ENCODE measurements at regions of chr9 and their contacts with region 1.

Region 1: GRCh38 chr9:87812375-87813118 is 70.1 kb upstream of the SPATA31E1 start:
- DNase-seq: no peak
- H3K4me3 Mint-ChIP-seq: no peak overlapping the region
- H3K27ac Mint-ChIP-seq: peak overlapping the region; percentile 12
- H3K4me1 Mint-ChIP-seq: peaks cover 25% of the 10 kb centered on the region
- H3K27me3 Mint-ChIP-seq: peaks cover 13% of the 10 kb centered on the region

Region 2: DNA sequence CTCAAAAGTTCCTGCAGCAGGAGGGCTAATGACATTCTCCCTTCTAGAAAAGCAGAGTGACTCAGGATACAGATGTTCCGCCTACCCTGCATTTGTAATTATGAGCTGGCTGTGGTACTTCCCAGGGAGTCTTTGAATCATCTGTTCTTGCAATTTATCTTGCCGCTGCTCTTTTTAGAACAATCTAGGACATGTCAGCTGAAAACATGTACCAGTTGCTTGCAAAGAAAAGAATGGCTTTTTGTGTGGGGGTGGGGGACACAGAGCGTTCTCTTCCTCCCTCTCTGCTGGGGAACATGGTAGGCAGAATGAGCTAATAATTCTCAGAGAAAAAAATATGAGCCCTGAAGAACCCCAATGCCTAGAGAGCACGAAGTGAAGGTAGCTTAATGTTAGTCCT is 1406.6 kb before region 1 on chr9:
- intact Hi-C with region 1: loop called (anchors 10 kb)
- DNase-seq: no peak
- H3K4me3 Mint-ChIP-seq: no peak overlapping the region
- H3K27ac Mint-ChIP-seq: peak overlapping the region; percentile 6
- H3K4me1 Mint-ChIP-seq: peaks cover 11% of the 10 kb centered on the region
- H3K27me3 Mint-ChIP-seq: peaks cover 7% of the 10 kb centered on the region

Region 3: GRCh38 chr9:87464110-87464965 is 348.2 kb before region 1 on chr9:
- intact Hi-C with region 1: loop called (anchors 5 kb)
- DNase-seq: no peak
- H3K4me3 Mint-ChIP-seq: no peak overlapping the region
- H3K27ac Mint-ChIP-seq: peak overlapping the region; percentile 55
- H3K4me1 Mint-ChIP-seq: peaks cover 12% of the 10 kb centered on the region
- H3K27me3 Mint-ChIP-seq: peaks cover 2% of the 10 kb centered on the region

Region 4: GRCh38 chr9:87707805-87708506 is 104.6 kb before region 1 on chr9:
- intact Hi-C with region 1: loop called (anchors 1 kb)
- DNase-seq: no peak
- H3K4me3 Mint-ChIP-seq: no peak overlapping the region
- H3K27ac Mint-ChIP-seq: no peak overlapping the region
- H3K4me1 Mint-ChIP-seq: peaks cover 30% of the 10 kb centered on the region
- H3K27me3 Mint-ChIP-seq: peaks cover 33% of the 10 kb centered on the region

Region 5: GRCh38 chr9:87740209-87740608 is 72.3 kb before region 1 on chr9:
- intact Hi-C with region 1: no loop called
- DNase-seq: no peak
- H3K4me3 Mint-ChIP-seq: no peak overlapping the region
- H3K27ac Mint-ChIP-seq: no peak overlapping the region
- H3K4me1 Mint-ChIP-seq: no peaks in the 10 kb centered on the region
- H3K27me3 Mint-ChIP-seq: peaks cover 7% of the 10 kb centered on the region

Region 6: DNA sequence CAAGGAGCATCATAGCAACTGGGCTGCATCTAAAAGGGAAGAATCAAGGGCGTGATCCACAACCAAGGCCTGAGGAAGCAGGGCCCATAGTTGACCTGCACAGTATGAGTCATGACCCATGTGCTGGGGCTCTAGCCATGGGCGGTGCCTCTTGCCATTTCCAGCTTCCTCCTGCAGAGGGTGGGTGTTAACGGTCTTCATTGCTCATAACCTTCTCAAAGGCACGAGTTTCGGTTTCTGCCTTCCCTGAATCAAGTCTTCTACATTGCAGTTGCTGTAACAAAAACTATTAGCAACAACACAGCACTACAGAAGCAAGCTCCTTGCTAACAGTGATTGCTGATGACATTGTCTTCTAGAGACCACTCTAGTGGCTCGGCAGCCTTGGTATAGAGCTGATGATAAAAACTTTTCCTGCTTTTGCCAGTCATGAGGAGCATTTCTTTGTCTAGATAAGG is 19.7 kb before region 1 on chr9:
- intact Hi-C with region 1: loop called (anchors 2 kb)
- DNase-seq: peak; percentile 7
- H3K4me3 Mint-ChIP-seq: no peak overlapping the region
- H3K27ac Mint-ChIP-seq: no peak overlapping the region
- H3K4me1 Mint-ChIP-seq: peaks cover 36% of the 10 kb centered on the region
- H3K27me3 Mint-ChIP-seq: no peaks in the 10 kb centered on the region

Region 7: DNA sequence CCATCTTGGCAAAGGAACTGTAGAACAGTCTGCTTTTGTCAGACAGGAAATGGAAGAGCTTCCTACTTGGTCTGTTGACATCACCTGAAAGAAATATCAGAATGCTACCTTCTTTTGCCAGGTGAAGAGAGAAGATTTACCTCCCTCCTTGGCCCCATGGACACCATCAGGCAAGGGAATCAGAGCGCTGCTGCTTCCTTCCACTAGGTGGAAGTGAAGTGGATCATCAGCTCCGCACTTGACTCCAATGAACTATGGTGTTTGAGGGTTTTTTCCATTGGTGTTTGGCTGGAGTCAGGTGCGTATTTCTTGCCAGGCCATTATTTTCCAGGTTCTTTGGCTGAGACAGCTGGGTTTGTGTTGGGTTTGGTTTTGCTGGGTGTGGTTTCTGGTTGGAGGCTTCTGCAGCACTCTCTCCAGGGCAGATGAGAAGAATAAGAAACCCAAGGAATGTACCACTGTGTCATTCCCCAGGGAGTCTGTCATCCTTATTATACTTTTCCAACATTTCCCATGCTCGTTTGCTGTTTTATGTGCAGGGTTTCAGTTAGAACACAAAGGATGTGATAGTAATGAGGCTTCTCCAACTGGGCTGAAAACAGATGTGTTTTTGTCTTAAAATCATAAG is 82.6 kb after region 1 on chr9:
- intact Hi-C with region 1: no loop called
- DNase-seq: no peak
- H3K4me3 Mint-ChIP-seq: no peak overlapping the region
- H3K27ac Mint-ChIP-seq: no peak overlapping the region
- H3K4me1 Mint-ChIP-seq: no peaks in the 10 kb centered on the region
- H3K27me3 Mint-ChIP-seq: peaks cover 16% of the 10 kb centered on the region